ENCODE measurements at regions of chr1 and their contacts with region 1.

Region 1: GRCh38 chr1:203702130-203702577 is 62.8 kb upstream of the LAX1 start:
- DNase-seq: peak; percentile 66 to 80 (median 68)
- H3K4me3 ChIP-seq: no peak overlapping the region
- H3K27ac ChIP-seq: no peak overlapping the region
- H3K4me1 ChIP-seq: peaks cover 9 to 39% (median 24%) of the 10 kb centered on the region in 4 experiments
- H3K27me3 ChIP-seq: no peaks in the 10 kb centered on the region

Region 2: DNA sequence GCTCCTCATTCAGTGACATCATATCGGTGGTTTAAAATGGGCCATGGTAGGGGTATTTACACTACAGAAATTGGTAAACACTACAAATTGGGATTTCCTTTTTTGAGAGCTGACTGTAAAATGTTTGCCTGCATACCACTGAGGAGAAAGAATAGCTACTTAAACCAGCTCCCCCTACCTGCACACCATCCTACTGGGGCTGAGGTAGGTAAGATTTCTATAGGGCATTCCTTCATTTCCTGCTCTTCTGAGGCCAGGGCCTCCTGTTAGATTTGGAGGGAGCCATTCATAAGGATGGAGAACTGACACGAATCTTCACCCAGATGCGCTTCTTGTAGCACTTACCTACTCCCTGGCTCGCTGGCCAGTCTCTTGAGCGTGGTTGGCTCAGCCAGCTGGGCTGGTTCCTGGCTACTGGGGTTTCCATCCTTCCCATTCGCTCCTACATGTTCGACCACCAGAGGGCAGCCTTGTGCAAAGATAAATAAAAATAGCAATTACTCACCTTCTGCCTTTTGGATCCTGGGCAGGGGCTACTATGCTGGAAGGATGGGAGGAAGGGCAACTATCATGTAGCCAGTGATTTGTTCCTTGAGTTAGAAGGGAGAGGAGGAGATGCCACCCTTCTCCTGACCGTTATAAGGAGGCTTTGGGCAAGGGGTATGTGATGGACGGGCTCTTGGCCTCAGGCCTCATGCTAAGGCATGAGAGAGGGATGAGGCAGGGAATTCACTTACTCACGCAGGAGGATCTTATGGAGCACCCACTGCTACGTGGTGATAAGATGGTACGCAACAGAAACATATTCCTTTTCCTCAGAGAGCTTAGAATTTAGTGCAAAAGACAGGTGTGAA is 197.5 kb before region 1 on chr1:
- CTCF ChIA-PET with region 1: interaction called, 172 read pairs
- POLR2A ChIA-PET with region 1: interaction called, 4 read pairs
- DNase-seq: peak; percentile 65 to 82 (median 72)
- H3K4me3 ChIP-seq: no peak overlapping the region
- H3K27ac ChIP-seq: no peak overlapping the region
- H3K4me1 ChIP-seq: no peaks in the 10 kb centered on the region
- H3K27me3 ChIP-seq: peaks cover 0 to 9% (median 3%) of the 10 kb centered on the region in 5 experiments

Region 3: GRCh38 chr1:203593723-203594122 is 108.4 kb before region 1 on chr1:
- CTCF ChIA-PET with region 1: interaction called, 80 read pairs
- POLR2A ChIA-PET with region 1: interaction called, 3 read pairs
- DNase-seq: peak; percentile 53 to 78 (median 72)
- H3K4me3 ChIP-seq: no peak overlapping the region
- H3K27ac ChIP-seq: no peak overlapping the region
- H3K4me1 ChIP-seq: peaks cover 0 to 5% (median 0%) of the 10 kb centered on the region in 4 experiments
- H3K27me3 ChIP-seq: peaks cover 0 to 2% (median 0%) of the 10 kb centered on the region in 5 experiments

Region 4: DNA sequence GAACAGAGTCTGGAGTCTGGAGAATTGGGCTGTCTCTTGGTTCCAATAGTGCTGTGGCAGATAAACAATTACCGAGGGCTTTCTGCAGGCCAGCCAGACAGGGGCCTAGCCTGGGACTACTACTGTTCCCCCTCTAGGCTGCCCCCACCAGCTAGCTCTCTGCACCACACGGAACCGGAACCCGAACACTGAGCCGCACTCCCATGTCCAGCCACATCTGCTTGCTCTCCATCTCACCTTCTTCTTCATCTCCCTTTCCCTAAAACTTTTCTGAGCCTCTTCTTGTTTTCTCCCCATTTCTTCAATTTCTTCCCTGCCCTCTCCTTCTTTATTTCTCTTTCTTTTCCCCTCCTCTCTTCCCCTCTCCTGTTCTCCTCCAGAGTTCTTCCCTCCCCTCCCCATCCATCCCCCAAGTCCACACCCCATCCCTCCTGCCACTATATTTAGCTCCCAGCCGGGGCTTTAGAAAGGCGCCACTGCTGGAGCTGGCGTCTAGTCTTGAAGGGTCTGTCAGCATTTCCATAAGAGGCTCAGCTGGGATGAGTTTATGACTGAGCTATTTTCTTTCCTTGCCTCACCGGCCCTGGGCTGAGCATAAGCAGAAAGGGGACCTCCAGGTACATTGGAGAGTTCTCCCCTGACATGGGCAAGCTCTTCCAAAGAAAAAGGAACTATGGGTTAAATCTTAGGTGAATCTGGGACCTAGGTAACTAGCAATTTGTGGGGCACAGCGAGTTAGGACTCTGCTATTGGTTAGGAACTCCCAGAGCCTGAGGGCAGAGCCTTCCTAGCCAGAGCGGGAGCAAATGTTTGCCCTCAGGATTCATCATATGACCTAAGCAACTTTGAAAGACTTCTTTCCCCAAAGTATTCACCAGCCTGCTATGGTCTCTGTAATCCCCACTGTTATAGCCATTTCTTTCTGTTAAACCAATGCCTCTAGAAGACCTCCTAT is 101.1 kb before region 1 on chr1:
- CTCF ChIA-PET with region 1: interaction called, 10 read pairs
- POLR2A ChIA-PET with region 1: no interaction called
- DNase-seq: no peak
- H3K4me3 ChIP-seq: no peak overlapping the region
- H3K27ac ChIP-seq: no peak overlapping the region
- H3K4me1 ChIP-seq: peaks cover 0 to 6% (median under 1%) of the 10 kb centered on the region in 4 experiments
- H3K27me3 ChIP-seq: no peaks in the 10 kb centered on the region

Region 5: DNA sequence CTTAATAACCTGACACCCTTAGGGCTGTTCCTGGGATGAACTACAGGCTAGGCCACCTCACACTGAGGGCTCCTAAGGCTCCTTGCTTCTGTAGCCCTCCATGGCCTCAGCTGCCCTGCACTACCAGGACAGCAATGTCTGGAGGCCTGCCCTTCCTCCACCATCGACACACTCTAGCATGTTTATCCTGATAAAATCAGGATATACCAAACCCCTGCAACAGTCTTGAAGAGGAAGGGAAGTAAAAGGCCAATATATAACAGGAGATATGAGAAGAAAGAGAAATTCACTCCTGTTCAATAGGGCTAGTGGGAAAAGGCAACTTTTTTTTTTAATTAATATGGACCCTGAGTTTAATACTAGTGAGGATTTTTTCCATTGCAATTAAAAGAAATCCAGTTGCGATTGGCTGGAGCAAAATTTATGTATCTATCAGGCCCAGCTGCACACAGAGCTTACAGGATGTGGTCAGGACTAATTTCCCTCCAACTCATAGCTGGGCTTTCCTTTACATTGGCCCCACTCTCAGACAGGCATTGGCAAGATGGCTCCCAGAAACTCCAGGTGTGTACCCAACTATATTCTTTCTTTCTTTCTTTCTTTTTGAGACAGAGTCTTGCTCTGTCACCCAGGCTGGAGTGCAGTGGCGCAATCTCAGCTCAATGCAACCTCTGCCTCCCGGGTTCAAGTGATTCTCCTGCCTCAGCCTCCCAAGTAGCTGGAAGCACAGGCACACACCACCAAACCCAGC is 89.0 kb before region 1 on chr1:
- CTCF ChIA-PET with region 1: interaction called, 23 read pairs
- POLR2A ChIA-PET with region 1: no interaction called
- DNase-seq: peak; percentile 43 to 91 (median 84)
- H3K4me3 ChIP-seq: peak overlapping the region in 2 of 7 experiments; percentile 11 to 19
- H3K27ac ChIP-seq: no peak overlapping the region
- H3K4me1 ChIP-seq: peaks cover 6 to 31% (median 31%) of the 10 kb centered on the region in 4 experiments
- H3K27me3 ChIP-seq: no peaks in the 10 kb centered on the region

Region 6: DNA sequence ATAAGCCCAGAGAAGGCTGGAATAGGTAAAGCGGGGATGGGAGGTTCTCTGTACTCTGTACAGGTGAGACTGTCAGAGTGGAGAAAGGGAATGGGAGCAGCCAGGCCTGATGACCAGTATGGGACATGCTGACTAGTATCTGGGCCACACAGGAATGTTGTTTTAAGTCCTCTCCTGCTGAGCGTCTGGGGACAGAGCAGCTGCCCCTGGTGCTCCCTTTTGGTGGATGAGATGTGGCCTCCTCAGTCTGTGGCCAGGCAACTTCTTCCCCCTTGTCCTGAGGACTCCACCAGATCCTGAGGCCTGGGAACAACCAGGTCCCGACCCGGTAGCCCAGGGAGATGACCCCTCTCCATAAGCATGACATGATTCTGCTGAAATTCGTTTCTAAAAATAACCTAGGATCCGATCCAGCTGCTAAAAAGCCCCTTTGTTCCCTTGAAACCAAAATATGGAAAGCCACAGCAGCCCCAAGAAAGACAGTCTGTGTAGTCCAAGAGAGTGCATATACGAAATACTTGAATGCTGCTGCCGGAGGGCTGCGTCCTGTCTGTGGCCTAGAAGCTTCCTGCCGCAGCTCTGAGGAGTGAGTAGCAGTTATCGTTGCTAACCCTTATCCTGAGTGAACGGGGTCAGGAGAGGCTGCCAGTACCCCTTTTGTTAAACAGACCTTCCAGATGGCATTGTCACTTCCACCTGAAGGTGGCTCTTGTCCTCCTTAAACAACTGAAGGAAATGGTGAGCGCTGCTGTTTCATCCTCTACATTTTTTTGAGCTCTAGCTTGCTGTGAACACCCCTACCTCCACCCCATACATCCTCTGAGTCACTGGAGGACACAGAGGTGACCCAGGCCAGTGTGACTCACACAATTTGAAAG is 28.4 kb before region 1 on chr1:
- CTCF ChIA-PET with region 1: interaction called, 56 read pairs
- POLR2A ChIA-PET with region 1: interaction called, 4 read pairs
- DNase-seq: peak; percentile 99 to 100 (median 100)
- H3K4me3 ChIP-seq: peak overlapping the region in 5 of 7 experiments; percentile 24 to 64 (median 39)
- H3K27ac ChIP-seq: peak overlapping the region; percentile 77 to 93
- H3K4me1 ChIP-seq: peaks cover 16 to 78% (median 59%) of the 10 kb centered on the region in 4 experiments
- H3K27me3 ChIP-seq: no peaks in the 10 kb centered on the region

Region 7: DNA sequence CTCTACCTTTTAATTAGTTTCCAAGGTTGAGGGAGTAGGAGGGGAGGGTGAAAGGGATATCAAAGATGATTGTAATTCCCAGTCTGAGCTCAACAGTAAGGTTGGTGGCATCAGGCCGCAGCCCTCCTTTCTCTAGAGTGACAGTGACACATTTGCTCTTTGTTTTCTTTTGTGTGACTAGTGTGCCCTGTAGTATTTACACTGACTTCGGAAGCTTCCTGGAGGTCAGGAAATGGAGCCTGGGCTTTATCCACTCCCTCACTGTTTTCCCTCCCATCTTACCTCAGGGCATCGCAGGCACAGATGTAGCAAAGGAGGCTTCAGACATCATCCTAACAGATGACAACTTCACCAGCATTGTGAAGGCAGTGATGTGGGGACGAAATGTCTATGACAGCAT is 18.1 kb after region 1 on chr1:
- CTCF ChIA-PET with region 1: interaction called, 10 read pairs
- POLR2A ChIA-PET with region 1: no interaction called
- DNase-seq: no peak
- H3K4me3 ChIP-seq: no peak overlapping the region
- H3K27ac ChIP-seq: no peak overlapping the region
- H3K4me1 ChIP-seq: no peaks in the 10 kb centered on the region
- H3K27me3 ChIP-seq: no peaks in the 10 kb centered on the region

Region 8: DNA sequence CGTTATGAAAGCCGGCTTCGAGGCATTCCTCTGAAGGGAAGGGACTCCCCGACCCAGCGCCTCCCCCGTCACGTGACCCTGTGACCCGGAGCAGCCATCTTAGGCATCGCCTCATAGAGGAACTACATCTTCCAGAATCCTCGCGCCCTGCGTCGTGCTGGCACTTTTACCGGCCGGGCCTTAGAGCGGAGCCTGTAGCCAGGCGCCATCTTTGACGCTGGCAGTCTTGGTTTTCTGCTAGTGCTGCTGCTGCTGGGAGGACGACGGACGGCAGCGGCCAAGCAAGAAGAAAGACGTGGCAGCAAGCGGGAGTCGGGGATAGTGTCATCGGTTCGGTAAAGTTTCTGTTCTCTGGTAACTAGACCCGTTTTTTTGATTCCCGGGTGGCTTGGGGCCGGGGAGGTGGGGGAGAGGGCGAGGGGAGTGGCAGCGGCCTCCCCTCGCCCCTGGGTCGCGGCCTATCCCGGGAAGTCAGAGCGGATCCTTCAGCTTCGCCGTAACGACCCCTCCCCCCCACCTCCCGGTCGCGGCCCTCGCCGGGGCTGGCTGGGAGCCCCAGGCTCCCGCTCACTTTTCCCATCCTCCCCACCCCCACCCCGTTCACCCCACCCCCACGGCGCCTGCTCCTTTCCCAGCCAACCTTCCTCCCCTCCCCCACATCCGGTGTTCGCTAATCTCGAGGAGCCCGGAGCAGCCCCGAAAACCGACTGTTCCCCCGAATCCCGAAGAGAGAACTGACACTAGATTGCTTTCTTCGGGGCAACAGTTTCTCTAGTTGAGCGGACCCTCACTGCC is 93.5 kb after region 1 on chr1 and contains the starts of genes ZBED6 and ZC3H11A:
- CTCF ChIA-PET with region 1: no interaction called
- POLR2A ChIA-PET with region 1: no interaction called
- DNase-seq: peak; percentile 98 to 99 (median 99)
- H3K4me3 ChIP-seq: peak within 1 kb of the TSS; percentile 75 to 93 (median 84)
- H3K27ac ChIP-seq: peak within 1 kb of the TSS; percentile 92 to 96
- H3K4me1 ChIP-seq: peaks cover 10 to 32% (median 14%) of the 10 kb centered on the region in 4 experiments
- H3K27me3 ChIP-seq: no peaks in the 10 kb centered on the region

Region 9: DNA sequence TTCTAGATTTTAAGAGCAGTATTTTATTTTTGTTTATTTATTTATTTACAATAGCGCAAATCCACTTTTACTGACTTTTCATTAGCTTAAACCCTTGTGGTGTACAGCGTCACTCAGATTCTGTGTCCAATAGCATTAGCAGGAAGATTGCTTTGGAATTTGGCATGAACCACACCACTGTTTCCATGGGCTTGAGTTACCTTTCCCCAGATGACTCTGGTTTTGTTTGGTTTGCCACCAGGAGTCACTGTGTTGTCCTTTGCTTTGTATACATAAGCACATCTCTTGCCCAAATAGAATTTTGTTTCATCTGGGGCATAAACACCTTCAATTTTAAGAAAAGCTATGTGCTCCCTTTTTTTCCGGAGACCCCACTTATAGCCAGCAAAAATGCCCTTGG is 133.3 kb after region 1 on chr1:
- CTCF ChIA-PET with region 1: no interaction called
- POLR2A ChIA-PET with region 1: no interaction called
- DNase-seq: no peak
- H3K4me3 ChIP-seq: no peak overlapping the region
- H3K27ac ChIP-seq: no peak overlapping the region
- H3K4me1 ChIP-seq: no peaks in the 10 kb centered on the region
- H3K27me3 ChIP-seq: no peaks in the 10 kb centered on the region